T-cell (primary cell): ENCODE measurements at regions of chr5 and their contacts with region 1.

Region 1: GRCh38 chr5:43156388-43156787 is 35.6 kb upstream of the NIM1K start:
- DNase-seq: no peak
- ATAC-seq: no peak
- H3K4me3 ChIP-seq: no peak overlapping the region
- H3K4me3 Mint-ChIP-seq: no peak overlapping the region
- H3K27ac ChIP-seq: no peak overlapping the region
- H3K27ac Mint-ChIP-seq: no peak overlapping the region
- H3K4me1 ChIP-seq: peaks cover 2 to 3% of the 10 kb centered on the region in 2 experiments
- H3K4me1 Mint-ChIP-seq: peaks cover 26 to 42% (median 30%) of the 10 kb centered on the region in 3 donors
- H3K27me3 ChIP-seq: no peaks in the 10 kb centered on the region
- H3K27me3 Mint-ChIP-seq: no peaks in the 10 kb centered on the region

Region 2: GRCh38 chr5:43171914-43172313 is 15.5 kb after region 1 on chr5:
- CTCF ChIA-PET with region 1: no interaction called
- POLR2A ChIA-PET with region 1: interaction called in 1 of 2 experiments, 12 read pairs
- DNase-seq: no peak
- ATAC-seq: no peak
- H3K4me3 ChIP-seq: no peak overlapping the region
- H3K4me3 Mint-ChIP-seq: no peak overlapping the region
- H3K27ac ChIP-seq: no peak overlapping the region
- H3K27ac Mint-ChIP-seq: no peak overlapping the region
- H3K4me1 ChIP-seq: no peaks in the 10 kb centered on the region
- H3K4me1 Mint-ChIP-seq: peaks cover 2 to 8% (median 3%) of the 10 kb centered on the region in 3 donors
- H3K27me3 ChIP-seq: no peaks in the 10 kb centered on the region
- H3K27me3 Mint-ChIP-seq: no peaks in the 10 kb centered on the region

Region 3: DNA sequence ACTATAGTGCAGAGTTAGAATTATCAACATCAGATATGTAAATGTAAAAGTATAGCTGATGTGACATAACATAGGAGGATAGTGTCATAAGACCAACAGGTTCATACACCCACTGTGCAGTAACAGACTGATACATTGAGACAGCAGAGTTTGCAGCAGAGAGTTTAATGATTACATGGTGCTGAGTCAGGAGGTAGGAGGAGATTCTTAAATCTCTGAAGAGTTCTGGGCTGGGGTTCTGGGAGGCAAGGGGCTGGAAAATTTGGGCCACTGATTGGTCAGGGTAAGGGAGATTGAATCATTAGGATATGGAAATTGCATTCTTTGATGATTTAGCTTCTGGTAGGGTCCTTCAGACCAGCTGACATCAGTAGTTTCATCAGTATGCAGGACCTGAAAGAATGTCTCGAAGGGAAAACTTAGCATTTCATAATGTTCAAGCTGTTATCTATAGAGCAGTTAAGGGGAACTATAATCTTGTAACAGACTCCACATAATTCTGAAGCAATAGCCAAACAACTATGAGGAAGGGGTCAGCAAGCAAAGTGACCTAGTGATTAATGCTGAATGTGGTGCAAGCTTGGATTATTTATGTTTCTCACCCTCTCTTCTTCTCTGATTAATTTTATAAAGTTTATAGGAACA is 220.2 kb after region 1 on chr5:
- CTCF ChIA-PET with region 1: interaction called in 1 of 2 experiments, 11 read pairs
- POLR2A ChIA-PET with region 1: no interaction called
- DNase-seq: no peak
- ATAC-seq: no peak
- H3K4me3 ChIP-seq: no peak overlapping the region
- H3K4me3 Mint-ChIP-seq: no peak overlapping the region
- H3K27ac ChIP-seq: no peak overlapping the region
- H3K27ac Mint-ChIP-seq: no peak overlapping the region
- H3K4me1 ChIP-seq: no peaks in the 10 kb centered on the region
- H3K4me1 Mint-ChIP-seq: no peaks in the 10 kb centered on the region
- H3K27me3 ChIP-seq: no peaks in the 10 kb centered on the region
- H3K27me3 Mint-ChIP-seq: no peaks in the 10 kb centered on the region

Region 4: DNA sequence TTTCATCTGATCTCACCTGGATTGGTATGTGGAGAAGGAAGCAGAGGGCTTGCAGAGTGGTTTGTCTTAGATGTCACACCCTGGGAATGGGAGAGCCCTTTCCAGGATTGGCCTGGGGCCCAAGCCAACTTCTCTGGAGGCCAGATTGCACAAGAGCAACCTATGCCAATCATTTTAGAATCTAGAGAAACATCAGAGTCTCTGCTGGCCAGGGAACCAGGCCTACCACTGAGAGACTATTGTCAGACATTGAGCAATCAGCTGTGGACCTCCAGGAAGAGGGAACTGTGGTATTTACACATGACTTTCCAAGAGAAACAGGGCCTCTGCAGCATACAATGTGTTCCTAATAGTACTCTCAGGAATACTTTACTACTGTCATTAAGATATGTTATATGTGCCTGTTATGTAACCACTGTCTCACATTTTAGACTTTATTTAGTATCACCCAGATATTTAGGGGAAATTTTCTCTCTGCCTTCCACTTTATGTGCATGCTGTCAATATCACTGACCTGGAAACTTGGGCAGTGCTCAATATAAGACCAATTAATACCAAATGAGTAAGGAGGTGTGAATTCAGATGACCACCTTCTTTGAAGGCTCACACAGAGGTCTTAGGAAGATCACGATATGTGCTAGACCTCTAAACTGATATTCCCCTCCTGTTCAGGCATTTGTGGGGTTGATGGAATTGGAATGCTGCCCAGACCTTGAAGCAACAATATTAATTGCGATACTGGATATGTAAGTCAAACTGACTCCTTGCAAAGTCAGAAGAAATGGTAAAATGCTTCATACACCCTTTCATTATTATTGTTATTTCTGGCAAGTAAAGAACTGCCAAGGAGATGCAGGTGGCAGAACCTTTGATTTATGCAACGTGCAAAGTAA is 276.3 kb after region 1 on chr5:
- CTCF ChIA-PET with region 1: no interaction called
- POLR2A ChIA-PET with region 1: no interaction called
- DNase-seq: no peak
- ATAC-seq: no peak
- H3K4me3 ChIP-seq: no peak overlapping the region
- H3K4me3 Mint-ChIP-seq: no peak overlapping the region
- H3K27ac ChIP-seq: no peak overlapping the region
- H3K27ac Mint-ChIP-seq: no peak overlapping the region
- H3K4me1 ChIP-seq: no peaks in the 10 kb centered on the region
- H3K4me1 Mint-ChIP-seq: no peaks in the 10 kb centered on the region
- H3K27me3 ChIP-seq: no peaks in the 10 kb centered on the region
- H3K27me3 Mint-ChIP-seq: no peaks in the 10 kb centered on the region